Breast epithelium (tissue), 4 donors: ENCODE measurements at regions of chr5 and their contacts with region 1.

Region 1: GRCh38 chr5:19975795-19976194 is 12.2 kb downstream of the CDH18 start:
- DNase-seq: no peak
- H3K4me3 ChIP-seq: no peak overlapping the region
- H3K27ac ChIP-seq: no peak overlapping the region
- H3K4me1 ChIP-seq: no peaks in the 10 kb centered on the region
- H3K27me3 ChIP-seq: no peaks in the 10 kb centered on the region
- CTCF ChIP-seq: no peak
- POLR2A ChIP-seq: no peak

Region 2: DNA sequence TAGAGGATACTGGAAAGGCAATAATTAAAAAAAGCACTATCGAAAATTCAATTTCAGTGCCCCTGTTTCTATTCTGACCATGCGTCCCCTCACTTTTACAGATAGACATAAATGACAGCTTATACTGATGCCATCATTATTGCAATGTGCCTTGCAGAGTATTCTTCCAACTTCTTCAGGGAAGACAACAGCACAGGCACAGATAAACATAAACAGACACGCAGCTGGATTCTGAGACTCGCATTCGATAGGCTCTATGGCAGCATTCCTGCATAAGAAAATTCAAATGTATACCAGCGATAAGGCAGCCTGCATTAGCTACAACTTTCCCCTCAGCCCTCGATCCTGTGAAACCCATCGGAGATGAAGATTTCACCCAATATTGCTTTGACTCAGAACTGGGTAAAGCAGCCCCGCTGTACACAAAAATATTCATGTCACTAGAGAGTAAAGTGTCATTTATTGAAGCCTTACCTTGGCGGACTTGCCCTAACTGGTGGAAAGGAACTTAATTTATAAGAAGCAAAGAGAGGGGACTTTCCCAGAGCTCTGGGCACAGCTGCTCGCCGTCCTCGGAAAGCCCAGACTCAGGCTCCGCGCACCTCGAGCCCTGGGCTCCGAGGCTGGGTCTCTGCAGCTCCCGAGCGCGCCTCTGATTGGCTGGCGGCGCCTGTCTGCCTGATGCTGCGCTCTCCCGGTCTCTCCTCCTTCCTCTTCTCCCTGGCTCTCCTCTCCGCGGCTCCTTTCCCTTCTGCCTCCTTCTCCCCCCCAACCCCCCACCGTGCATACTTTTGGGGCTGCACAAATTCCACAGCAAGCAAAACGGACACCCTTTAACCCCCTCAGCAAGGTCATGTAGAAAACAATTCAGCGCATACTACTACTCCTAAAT is 12.1 kb after region 1 on chr5 and contains the start of gene CDH18:
- intact Hi-C with region 1: no loop called
- DNase-seq: peak; percentile 17 to 51
- H3K4me3 ChIP-seq: peak within 1 kb of the TSS in 2 of 3 donors; percentile 2 to 55
- H3K27ac ChIP-seq: no peak within 1 kb of the TSS
- H3K4me1 ChIP-seq: no peaks in the 10 kb centered on the region
- H3K27me3 ChIP-seq: no peaks in the 10 kb centered on the region
- CTCF ChIP-seq: no peak
- POLR2A ChIP-seq: no peak
- total RNA-seq, gene CDH18: not detected

Region 3: DNA sequence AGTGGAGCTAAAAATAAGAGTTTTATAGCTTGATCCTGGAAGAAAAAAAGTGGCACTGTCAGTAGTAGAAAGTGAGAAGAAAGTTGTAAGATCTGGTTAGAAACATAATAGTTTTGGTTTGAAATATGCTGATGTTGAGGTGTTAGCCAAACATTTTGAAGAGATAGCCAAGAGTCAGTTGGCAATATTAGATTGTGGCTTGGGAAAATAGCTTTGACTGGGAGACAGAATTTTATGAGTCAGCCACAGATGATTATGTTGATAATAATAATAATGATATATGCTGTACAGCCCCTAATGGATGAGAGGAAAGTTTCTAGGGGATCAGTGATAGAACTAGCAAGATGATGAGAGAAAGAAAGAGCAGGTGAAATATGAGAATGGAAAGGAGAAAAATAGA is 24.6 kb after region 1 on chr5:
- intact Hi-C with region 1: loop called (anchors 2 kb)
- DNase-seq: no peak
- H3K4me3 ChIP-seq: no peak overlapping the region
- H3K27ac ChIP-seq: no peak overlapping the region
- H3K4me1 ChIP-seq: no peaks in the 10 kb centered on the region
- H3K27me3 ChIP-seq: no peaks in the 10 kb centered on the region
- CTCF ChIP-seq: no peak
- POLR2A ChIP-seq: no peak

Region 4: DNA sequence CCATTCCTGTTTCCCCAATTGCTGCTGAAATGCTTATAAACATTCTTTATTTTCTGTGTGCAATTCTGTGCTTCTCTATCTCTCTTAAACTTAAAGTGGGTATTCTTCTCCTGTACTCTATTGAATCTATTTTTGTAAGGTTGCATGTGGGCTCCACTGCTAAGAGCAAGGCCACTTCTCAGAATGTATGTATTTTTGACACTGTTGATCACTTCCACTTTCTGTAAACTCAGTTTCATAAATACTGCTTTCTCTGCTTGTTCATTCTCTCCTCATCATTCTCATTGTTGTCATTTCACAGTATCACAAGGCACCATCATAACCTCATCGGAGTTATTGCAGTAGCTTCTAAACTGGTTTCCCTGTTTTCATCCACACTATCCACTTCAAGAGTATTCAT is 495.2 kb after region 1 on chr5:
- intact Hi-C with region 1: no loop called
- DNase-seq: no peak
- H3K4me3 ChIP-seq: no peak overlapping the region
- H3K27ac ChIP-seq: no peak overlapping the region
- H3K4me1 ChIP-seq: no peaks in the 10 kb centered on the region
- H3K27me3 ChIP-seq: no peaks in the 10 kb centered on the region
- CTCF ChIP-seq: no peak
- POLR2A ChIP-seq: no peak